ENCODE measurements at regions of chr4 and their contacts with region 1.

Region 1: DNA sequence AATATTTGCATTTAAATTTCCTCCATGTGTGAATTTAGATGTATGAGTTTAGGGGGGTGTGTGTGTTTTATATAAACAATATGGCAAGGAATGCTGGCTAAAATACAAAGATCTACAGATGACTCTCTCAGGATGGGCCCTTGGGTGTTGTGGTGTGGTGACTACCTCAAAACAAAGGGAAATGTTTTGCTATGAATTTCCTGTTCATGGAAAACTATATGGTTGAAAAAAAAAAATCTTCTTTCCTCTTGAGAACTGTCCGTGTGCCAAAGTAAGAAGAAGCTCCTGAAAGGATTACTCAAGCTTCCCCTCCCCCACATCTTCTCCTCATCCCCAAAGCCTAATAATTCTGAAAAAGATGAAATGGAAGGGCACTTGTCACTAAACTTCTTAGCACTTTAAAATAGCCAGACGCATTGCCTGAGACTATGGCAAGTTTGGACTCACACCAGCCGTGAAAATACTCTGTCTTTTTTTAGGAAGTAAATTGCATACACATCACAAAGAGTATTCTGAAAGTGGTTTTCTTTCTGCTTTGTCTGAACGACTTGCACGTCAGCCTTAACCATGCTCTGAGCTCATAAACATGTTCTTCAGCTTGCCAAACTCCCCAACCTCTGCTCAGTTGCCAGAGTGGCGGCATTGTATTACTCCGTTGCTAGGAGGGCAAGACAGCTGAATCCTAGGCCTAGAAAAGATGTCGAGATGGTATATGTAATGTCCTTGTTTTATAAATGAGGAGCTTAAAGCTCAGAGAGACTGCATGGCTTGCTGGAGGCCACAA is 250.4 kb upstream of the JADE1 start:
- DNase-seq: no peak

Region 2: DNA sequence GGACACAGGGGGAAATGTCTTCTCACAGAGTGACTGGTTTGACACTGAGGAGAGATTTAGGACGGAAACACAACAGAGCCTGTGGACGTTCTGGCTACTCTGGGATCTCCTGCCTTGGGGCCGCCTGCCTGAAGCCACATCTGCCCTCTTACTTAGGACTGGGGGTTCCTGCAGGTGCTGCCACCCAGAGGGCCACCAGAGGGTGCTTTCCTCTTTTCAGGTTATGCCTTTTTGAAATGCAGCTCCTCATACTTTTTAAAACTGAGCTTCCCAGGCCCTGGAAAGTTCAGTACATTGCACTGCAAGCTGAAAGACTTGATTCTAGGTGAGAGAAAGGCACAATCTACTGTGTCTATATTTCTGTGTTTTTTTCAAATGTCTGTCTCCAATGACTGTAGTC is 179.2 kb before region 1 on chr4:
- intact Hi-C with region 1: loop called (anchors 10 kb)
- DNase-seq: no peak

Region 3: GRCh38 chr4:128974136-128974581 is 415.1 kb after region 1 on chr4:
- intact Hi-C with region 1: no loop called
- DNase-seq: no peak